Right lobe of liver (tissue), 6 donors: ENCODE measurements at regions of chr18 and their contacts with region 1.

Region 1: DNA sequence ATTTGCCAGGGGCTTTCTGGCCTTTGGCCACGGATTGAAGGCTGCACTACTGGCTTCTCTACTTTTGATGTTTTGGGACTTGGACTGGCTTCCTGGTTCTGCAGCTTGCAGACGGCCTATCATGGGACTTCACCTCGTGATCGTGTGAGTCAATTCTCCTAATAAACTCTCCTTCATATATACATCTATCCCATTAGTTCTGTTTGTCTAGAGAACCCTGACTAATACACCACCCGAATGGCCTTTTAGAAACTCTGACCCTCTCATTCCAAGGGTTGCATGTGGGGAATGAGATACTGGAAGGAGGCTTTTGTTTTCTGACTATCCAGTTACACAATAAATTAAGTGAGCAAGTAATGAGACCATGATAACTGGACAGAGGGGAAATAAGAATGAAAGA is 430.7 kb downstream of the CDH2 start:
- DNase-seq: no peak
- ATAC-seq: no peak
- H3K4me3 ChIP-seq: no peak overlapping the region
- H3K27ac ChIP-seq: no peak overlapping the region
- H3K4me1 ChIP-seq: no peaks in the 10 kb centered on the region
- H3K27me3 ChIP-seq: no peaks in the 10 kb centered on the region
- CTCF ChIP-seq: no peak
- POLR2A ChIP-seq: no peak

Region 2: GRCh38 chr18:27605107-27605834 is 141.0 kb before region 1 on chr18:
- intact Hi-C with region 1: loop called (anchors 10 kb)
- DNase-seq: peak in 2 of 3 donors; percentile 35 to 72
- ATAC-seq: peak; percentile 96 to 98 (median 98)
- H3K4me3 ChIP-seq: no peak overlapping the region
- H3K27ac ChIP-seq: peak overlapping the region in 1 of 3 donors; percentile 28
- H3K4me1 ChIP-seq: peaks cover 0 to 10% (median 0%) of the 10 kb centered on the region in 4 donors
- H3K27me3 ChIP-seq: no peaks in the 10 kb centered on the region
- CTCF ChIP-seq: peak; percentile 86 to 89 (median 88)
- POLR2A ChIP-seq: no peak

Region 3: GRCh38 chr18:28019425-28020108 is 273.3 kb after region 1 on chr18:
- intact Hi-C with region 1: no loop called
- DNase-seq: no peak
- ATAC-seq: peak; percentile 70 to 92 (median 82)
- H3K4me3 ChIP-seq: no peak overlapping the region
- H3K27ac ChIP-seq: no peak overlapping the region
- H3K4me1 ChIP-seq: peaks cover 0 to 13% (median 4%) of the 10 kb centered on the region in 4 donors
- H3K27me3 ChIP-seq: no peaks in the 10 kb centered on the region
- CTCF ChIP-seq: no peak
- POLR2A ChIP-seq: no peak